Activated CD8-positive, alpha-beta T cell treated with anti-CD3 and anti-CD28 coated beads, Interleukin-2, amount 10 ng/mL, durations not matched to agents 7 days and 5 days (primary cell): ENCODE measurements at regions of chr16 and their contacts with region 1.

Region 1: DNA sequence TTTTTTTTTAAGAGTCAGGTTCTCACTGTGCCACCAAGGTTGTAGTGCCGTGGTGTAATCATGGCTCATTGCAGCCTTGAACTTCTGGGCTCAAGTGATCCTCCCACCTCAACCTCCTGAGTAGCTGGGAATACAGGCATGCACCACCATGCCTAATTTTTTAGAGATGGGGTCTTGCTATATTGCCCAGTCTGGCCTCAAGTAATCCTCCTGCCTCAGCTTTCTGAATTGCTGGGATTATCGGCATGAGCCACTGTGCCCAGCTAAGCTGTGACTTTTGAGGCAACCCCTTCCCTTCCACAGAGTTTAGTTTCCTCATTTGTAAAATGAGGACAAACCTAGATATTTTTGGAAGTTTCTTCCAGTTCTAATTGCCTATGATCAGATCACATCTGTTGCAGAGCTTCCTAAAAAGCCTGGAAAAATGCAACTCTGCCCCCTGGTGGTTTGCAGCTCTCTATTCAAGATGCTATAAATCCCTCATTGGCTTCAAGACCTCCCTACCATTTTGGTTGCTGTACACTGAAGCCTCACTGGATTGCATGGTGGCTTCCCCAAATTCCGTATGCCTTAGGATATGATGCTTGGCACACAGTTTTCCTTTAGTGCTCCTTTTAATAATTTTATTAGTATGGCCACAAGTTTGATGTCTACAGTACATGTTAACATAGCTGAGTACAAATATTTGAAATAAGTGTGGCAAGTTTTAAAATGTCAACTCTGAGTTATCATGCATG is 19.3 kb downstream of the GDE1 start:
- DNase-seq: peak; percentile 82
- ATAC-seq: peak; percentile 79
- H3K4me3 Mint-ChIP-seq: no peak overlapping the region
- H3K27ac Mint-ChIP-seq: no peak overlapping the region
- H3K4me1 Mint-ChIP-seq: peaks cover 7% of the 10 kb centered on the region
- H3K27me3 Mint-ChIP-seq: no peaks in the 10 kb centered on the region

Region 2: DNA sequence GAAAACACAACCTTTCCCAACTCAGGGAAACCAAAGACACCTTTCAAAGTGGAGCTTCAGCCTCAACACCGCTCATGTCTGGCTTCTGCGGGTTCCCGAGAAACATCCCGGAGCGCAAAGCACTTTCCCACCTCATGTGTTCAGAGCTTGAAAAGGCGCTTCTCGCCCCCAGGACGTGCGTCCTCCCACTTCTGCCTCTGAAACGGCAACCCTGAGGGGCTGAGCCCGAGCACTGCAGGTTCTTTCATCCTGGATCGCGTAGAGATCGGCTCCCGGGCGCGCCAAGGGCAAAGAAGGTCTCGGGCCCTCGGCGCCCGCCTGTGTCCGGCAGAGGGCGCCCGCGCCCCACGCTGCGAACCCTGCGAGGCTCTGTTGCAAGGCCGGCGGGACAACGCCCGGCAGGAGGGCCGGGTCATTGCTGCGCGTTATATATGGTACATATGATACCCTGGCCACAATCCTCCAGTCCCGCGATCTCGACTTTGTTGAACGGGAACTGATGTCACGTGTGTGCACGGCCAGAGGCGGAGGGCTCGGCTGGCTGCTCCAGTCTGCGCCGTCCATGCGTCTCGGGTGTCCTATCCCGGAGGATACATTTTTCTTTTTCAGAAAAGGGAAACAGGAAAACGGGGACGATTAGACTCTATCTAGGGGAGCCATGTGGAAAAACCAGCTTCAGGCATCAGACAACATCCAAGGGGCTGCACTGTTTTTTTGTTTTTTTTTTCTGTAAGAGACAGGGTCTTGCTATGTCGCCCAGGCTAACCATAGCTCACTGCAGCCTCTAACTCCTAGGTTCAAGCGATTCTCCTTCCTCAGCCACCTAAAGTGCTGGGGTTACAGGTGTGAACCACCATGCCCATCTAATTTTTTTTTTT is 416.0 kb before region 1 on chr16:
- CTCF ChIA-PET with region 1: interaction called, 42 read pairs
- POLR2A ChIA-PET with region 1: no interaction called
- DNase-seq: peak; percentile 81
- ATAC-seq: peak; percentile 99
- H3K4me3 Mint-ChIP-seq: peak overlapping the region; percentile 57
- H3K27ac Mint-ChIP-seq: no peak overlapping the region
- H3K4me1 Mint-ChIP-seq: peaks cover 7% of the 10 kb centered on the region
- H3K27me3 Mint-ChIP-seq: peaks cover 9% of the 10 kb centered on the region

Region 3: GRCh38 chr16:19389246-19389645 is 113.3 kb before region 1 on chr16:
- CTCF ChIA-PET with region 1: interaction called, 44 read pairs
- POLR2A ChIA-PET with region 1: no interaction called
- DNase-seq: peak; percentile 73
- ATAC-seq: peak; percentile 88
- H3K4me3 Mint-ChIP-seq: no peak overlapping the region
- H3K27ac Mint-ChIP-seq: no peak overlapping the region
- H3K4me1 Mint-ChIP-seq: peaks cover 1% of the 10 kb centered on the region
- H3K27me3 Mint-ChIP-seq: peaks cover 35% of the 10 kb centered on the region

Region 4: GRCh38 chr16:19513377-19514053 is 11.0 kb after region 1 on chr16:
- CTCF ChIA-PET with region 1: interaction called, 35 read pairs
- POLR2A ChIA-PET with region 1: no interaction called
- DNase-seq: no peak
- ATAC-seq: no peak
- H3K4me3 Mint-ChIP-seq: no peak overlapping the region
- H3K27ac Mint-ChIP-seq: no peak overlapping the region
- H3K4me1 Mint-ChIP-seq: peaks cover 25% of the 10 kb centered on the region
- H3K27me3 Mint-ChIP-seq: no peaks in the 10 kb centered on the region

Region 5: GRCh38 chr16:19521471-19522396 is 19.2 kb after region 1 on chr16 and contains the start of gene GDE1:
- CTCF ChIA-PET with region 1: interaction called, 25 read pairs
- POLR2A ChIA-PET with region 1: interaction called, 3 read pairs
- DNase-seq: peak; percentile 94
- ATAC-seq: peak; percentile 85
- H3K4me3 Mint-ChIP-seq: peak within 1 kb of the TSS; percentile 97
- H3K27ac Mint-ChIP-seq: peak within 1 kb of the TSS; percentile 93
- H3K4me1 Mint-ChIP-seq: peaks cover 58% of the 10 kb centered on the region
- H3K27me3 Mint-ChIP-seq: no peaks in the 10 kb centered on the region
- total RNA-seq, gene GDE1: 19.7 to 25.9 TPM